B cell (primary cell): ENCODE measurements at regions of chr4 and their contacts with region 1.

Region 1: DNA sequence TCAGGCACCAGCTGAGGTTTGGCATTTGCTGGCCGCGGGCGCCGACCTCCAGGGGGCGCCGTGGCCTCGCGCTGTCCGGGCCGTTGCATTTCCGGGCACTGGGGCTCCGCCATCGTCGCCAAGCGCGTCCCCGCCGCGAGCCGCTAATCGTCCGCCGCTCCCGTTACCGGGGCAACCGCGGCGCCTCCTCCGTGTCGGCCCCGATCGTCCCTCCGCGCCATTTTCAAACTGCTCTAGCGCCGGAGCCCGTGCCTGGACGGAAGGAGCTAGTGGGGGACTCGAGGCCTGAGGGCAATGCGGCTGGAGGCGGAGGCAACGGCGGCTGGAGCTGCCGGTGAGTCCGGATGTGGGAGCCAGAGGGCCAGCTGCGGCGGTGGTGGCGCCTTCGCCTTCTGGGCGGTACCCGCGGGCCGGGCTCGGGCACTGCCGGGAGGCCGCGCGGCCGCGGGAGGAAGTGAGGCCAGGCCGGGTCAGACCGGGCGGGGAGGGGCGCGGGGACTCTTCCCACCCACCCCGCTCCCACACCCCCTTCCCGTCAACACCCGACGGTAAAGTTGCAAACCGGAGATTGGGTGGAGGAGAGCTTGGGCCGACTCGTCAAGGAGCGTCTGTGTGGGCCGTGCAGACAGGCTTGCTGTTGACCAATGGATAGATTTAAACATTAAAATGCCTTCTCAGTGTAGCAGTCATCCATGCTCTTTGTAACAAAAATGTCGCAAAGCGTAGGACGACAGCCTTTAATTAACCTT is at the start of gene CEP135:
- DNase-seq: peak; percentile 96
- ATAC-seq: peak; percentile 78
- H3K4me3 ChIP-seq: peak within 1 kb of the TSS; percentile 73 to 91 (median 87)
- H3K4me3 Mint-ChIP-seq: peak within 1 kb of the TSS; percentile 89
- H3K27ac ChIP-seq: peak within 1 kb of the TSS; percentile 100
- H3K27ac Mint-ChIP-seq: peak within 1 kb of the TSS; percentile 98
- H3K4me1 ChIP-seq: peaks cover 30 to 37% of the 10 kb centered on the region in 2 donors
- H3K4me1 Mint-ChIP-seq: peaks cover 53% of the 10 kb centered on the region
- H3K27me3 ChIP-seq: no peaks in the 10 kb centered on the region
- H3K27me3 Mint-ChIP-seq: no peaks in the 10 kb centered on the region
- CTCF ChIP-seq: peak; percentile 99
- total RNA-seq, gene CEP135: 39.4 and 41.0 TPM in 2 replicates

Region 2: DNA sequence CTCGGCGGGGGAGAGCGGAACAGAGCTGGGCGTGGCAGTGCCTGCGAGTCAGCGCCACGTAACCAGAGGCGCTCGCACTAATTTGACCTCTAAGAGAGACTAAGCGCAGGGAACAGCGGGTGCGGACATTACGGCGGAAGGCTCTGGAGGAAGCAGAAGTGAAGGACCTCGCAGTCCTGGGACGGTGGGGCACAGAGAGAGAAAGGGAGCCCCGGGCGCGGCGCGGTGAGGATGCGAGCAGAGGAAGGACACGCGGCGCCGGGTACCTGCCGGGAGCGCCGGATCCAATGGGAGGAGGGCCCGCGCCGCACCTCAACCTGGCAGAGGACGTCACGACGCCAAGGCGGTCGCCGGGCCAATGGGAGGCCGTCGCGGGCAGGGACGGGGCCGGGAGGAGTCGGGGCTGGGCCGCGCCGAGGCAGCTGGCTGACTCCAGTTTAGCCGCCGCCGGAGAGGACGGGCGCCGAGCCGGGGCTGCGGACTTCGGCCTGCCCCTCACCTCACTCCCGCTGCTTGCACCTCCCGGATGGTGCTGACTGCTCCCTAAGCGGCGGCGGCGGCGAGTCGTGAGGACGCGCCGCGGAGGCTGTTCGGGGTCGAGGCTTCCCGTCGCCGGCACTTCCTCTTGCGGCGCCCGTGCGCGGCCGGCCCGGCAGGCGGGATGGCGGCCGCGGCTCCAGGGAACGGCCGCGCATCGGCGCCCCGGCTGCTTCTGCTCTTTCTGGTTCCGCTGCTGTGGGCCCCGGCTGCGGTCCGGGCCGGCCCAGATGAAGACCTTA is 553.2 kb before region 1 on chr4 and contains the start of gene TMEM165:
- CTCF ChIA-PET with region 1: interaction called, 5 read pairs
- POLR2A ChIA-PET with region 1: interaction called, 6 read pairs
- intact Hi-C with region 1: loop called (anchors 2 kb)
- DNase-seq: peak; percentile 94
- ATAC-seq: peak; percentile 91
- H3K4me3 ChIP-seq: peak within 1 kb of the TSS; percentile 67 to 94 (median 77)
- H3K4me3 Mint-ChIP-seq: peak within 1 kb of the TSS; percentile 97
- H3K27ac ChIP-seq: peak within 1 kb of the TSS; percentile 91 to 93
- H3K27ac Mint-ChIP-seq: peak within 1 kb of the TSS; percentile 97
- H3K4me1 ChIP-seq: peaks cover 28 to 33% of the 10 kb centered on the region in 2 donors
- H3K4me1 Mint-ChIP-seq: peaks cover 39% of the 10 kb centered on the region
- H3K27me3 ChIP-seq: no peaks in the 10 kb centered on the region
- H3K27me3 Mint-ChIP-seq: no peaks in the 10 kb centered on the region
- CTCF ChIP-seq: no peak
- total RNA-seq, gene TMEM165: 110 and 113 TPM in 2 replicates

Region 3: GRCh38 chr4:55866973-55867574 is 81.8 kb before region 1 on chr4:
- CTCF ChIA-PET with region 1: interaction called, 22 read pairs
- POLR2A ChIA-PET with region 1: no interaction called
- intact Hi-C with region 1: no loop called
- DNase-seq: peak; percentile 64
- ATAC-seq: peak; percentile 76
- H3K4me3 ChIP-seq: no peak overlapping the region
- H3K4me3 Mint-ChIP-seq: no peak overlapping the region
- H3K27ac ChIP-seq: no peak overlapping the region
- H3K27ac Mint-ChIP-seq: no peak overlapping the region
- H3K4me1 ChIP-seq: peaks cover 0 to 4% of the 10 kb centered on the region in 2 donors
- H3K4me1 Mint-ChIP-seq: peaks cover 4% of the 10 kb centered on the region
- H3K27me3 ChIP-seq: no peaks in the 10 kb centered on the region
- H3K27me3 Mint-ChIP-seq: no peaks in the 10 kb centered on the region
- CTCF ChIP-seq: peak; percentile 96

Region 4: GRCh38 chr4:56134266-56134665 is 185.4 kb after region 1 on chr4:
- CTCF ChIA-PET with region 1: no interaction called
- POLR2A ChIA-PET with region 1: no interaction called
- intact Hi-C with region 1: no loop called
- DNase-seq: no peak
- ATAC-seq: no peak
- H3K4me3 ChIP-seq: no peak overlapping the region
- H3K4me3 Mint-ChIP-seq: no peak overlapping the region
- H3K27ac ChIP-seq: no peak overlapping the region
- H3K27ac Mint-ChIP-seq: no peak overlapping the region
- H3K4me1 ChIP-seq: no peaks in the 10 kb centered on the region
- H3K4me1 Mint-ChIP-seq: peaks cover 3% of the 10 kb centered on the region
- H3K27me3 ChIP-seq: no peaks in the 10 kb centered on the region
- H3K27me3 Mint-ChIP-seq: no peaks in the 10 kb centered on the region
- CTCF ChIP-seq: no peak

Region 5: GRCh38 chr4:56301181-56302076 is 352.5 kb after region 1 on chr4:
- CTCF ChIA-PET with region 1: interaction called, 9 read pairs
- POLR2A ChIA-PET with region 1: no interaction called
- intact Hi-C with region 1: loop called (anchors 1 kb)
- DNase-seq: peak; percentile 56
- ATAC-seq: peak; percentile 57
- H3K4me3 ChIP-seq: no peak overlapping the region
- H3K4me3 Mint-ChIP-seq: no peak overlapping the region
- H3K27ac ChIP-seq: no peak overlapping the region
- H3K27ac Mint-ChIP-seq: no peak overlapping the region
- H3K4me1 ChIP-seq: peaks cover 0 to 5% of the 10 kb centered on the region in 2 donors
- H3K4me1 Mint-ChIP-seq: peaks cover 7% of the 10 kb centered on the region
- H3K27me3 ChIP-seq: no peaks in the 10 kb centered on the region
- H3K27me3 Mint-ChIP-seq: no peaks in the 10 kb centered on the region
- CTCF ChIP-seq: peak; percentile 61

Region 6: DNA sequence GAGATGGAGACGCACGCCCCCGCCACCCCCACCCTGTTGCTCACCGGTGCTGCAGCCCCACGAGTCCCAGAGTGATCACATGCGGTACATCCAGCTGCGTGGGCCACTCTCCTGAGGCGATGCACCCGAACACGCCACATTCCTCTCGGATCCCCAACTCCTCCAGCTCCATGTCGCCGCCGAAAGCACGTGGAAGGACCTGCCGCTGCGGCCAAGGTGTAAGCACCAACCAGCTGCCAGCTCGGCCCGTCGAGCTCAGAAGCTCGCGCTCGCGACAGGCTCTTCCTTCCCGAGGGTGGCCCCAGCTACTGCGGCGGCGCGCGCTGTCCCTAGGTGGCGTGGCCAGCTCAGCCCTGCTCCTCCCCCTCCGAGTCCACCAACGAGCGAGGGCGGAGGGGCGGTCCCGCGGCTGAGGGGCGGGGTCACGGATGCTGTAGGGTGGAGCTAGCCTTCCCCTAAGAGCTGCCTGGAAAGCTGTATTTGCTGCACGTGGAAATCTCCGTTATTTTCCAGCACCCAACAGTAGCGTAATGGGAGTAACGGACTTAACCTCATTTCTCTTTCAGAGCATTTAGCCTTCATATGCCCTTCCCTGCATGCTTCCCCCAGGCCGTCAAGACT is 486.5 kb after region 1 on chr4 and contains the start of gene PPAT:
- CTCF ChIA-PET with region 1: interaction called, 8 read pairs
- POLR2A ChIA-PET with region 1: interaction called, 5 read pairs
- intact Hi-C with region 1: loop called (anchors 1 kb)
- DNase-seq: peak; percentile 99
- ATAC-seq: peak; percentile 84
- H3K4me3 ChIP-seq: peak within 1 kb of the TSS; percentile 82 to 97 (median 92)
- H3K4me3 Mint-ChIP-seq: peak within 1 kb of the TSS; percentile 96
- H3K27ac ChIP-seq: peak within 1 kb of the TSS; percentile 77 to 83
- H3K27ac Mint-ChIP-seq: peak within 1 kb of the TSS; percentile 99
- H3K4me1 ChIP-seq: peaks cover 16 to 22% of the 10 kb centered on the region in 2 donors
- H3K4me1 Mint-ChIP-seq: peaks cover 29% of the 10 kb centered on the region
- H3K27me3 ChIP-seq: no peaks in the 10 kb centered on the region
- H3K27me3 Mint-ChIP-seq: no peaks in the 10 kb centered on the region
- CTCF ChIP-seq: peak; percentile 19
- total RNA-seq, gene PPAT: 6.7 and 9.2 TPM in 2 replicates

Region 7: GRCh38 chr4:56907489-56908205 is 958.7 kb after region 1 on chr4 and contains the start of gene REST:
- CTCF ChIA-PET with region 1: interaction called, 3 read pairs
- POLR2A ChIA-PET with region 1: no interaction called
- intact Hi-C with region 1: loop called (anchors 2 kb)
- DNase-seq: peak; percentile 92
- ATAC-seq: peak; percentile 65
- H3K4me3 ChIP-seq: peak within 1 kb of the TSS; percentile 62 to 98 (median 88)
- H3K4me3 Mint-ChIP-seq: peak within 1 kb of the TSS; percentile 93
- H3K27ac ChIP-seq: peak within 1 kb of the TSS; percentile 47 to 77
- H3K27ac Mint-ChIP-seq: peak within 1 kb of the TSS; percentile 92
- H3K4me1 ChIP-seq: peaks cover 29 to 35% of the 10 kb centered on the region in 2 donors
- H3K4me1 Mint-ChIP-seq: peaks cover 42% of the 10 kb centered on the region
- H3K27me3 ChIP-seq: no peaks in the 10 kb centered on the region
- H3K27me3 Mint-ChIP-seq: peaks cover 3% of the 10 kb centered on the region
- CTCF ChIP-seq: no peak
- total RNA-seq, gene REST: 59.4 and 61.1 TPM in 2 replicates